Psoas muscle (tissue), 8 donors: ENCODE measurements at regions of chr9 and their contacts with region 1.

Region 1: GRCh38 chr9:111483862-111484571 is at the start of gene ECPAS:
- DNase-seq: peak; percentile 81 to 91
- ATAC-seq: peak; percentile 68 to 73 (median 72)
- H3K4me3 ChIP-seq: peak within 1 kb of the TSS; percentile 98
- H3K27ac ChIP-seq: peak within 1 kb of the TSS; percentile 100
- H3K4me1 ChIP-seq: peaks cover 25% of the 10 kb centered on the region
- H3K27me3 ChIP-seq: no peaks in the 10 kb centered on the region
- CTCF ChIP-seq: no peak
- total RNA-seq, gene ECPAS: 273 to 456 (median 349) TPM

Region 2: GRCh38 chr9:111449705-111450104 is 34.3 kb before region 1 on chr9:
- intact Hi-C with region 1: loop called (anchors 5 kb)
- DNase-seq: no peak
- ATAC-seq: peak; percentile 39 to 66 (median 62)
- H3K4me3 ChIP-seq: peak overlapping the region; percentile 2
- H3K27ac ChIP-seq: peak overlapping the region; percentile 70
- H3K4me1 ChIP-seq: peaks cover 50% of the 10 kb centered on the region
- H3K27me3 ChIP-seq: no peaks in the 10 kb centered on the region
- CTCF ChIP-seq: no peak

Region 3: DNA sequence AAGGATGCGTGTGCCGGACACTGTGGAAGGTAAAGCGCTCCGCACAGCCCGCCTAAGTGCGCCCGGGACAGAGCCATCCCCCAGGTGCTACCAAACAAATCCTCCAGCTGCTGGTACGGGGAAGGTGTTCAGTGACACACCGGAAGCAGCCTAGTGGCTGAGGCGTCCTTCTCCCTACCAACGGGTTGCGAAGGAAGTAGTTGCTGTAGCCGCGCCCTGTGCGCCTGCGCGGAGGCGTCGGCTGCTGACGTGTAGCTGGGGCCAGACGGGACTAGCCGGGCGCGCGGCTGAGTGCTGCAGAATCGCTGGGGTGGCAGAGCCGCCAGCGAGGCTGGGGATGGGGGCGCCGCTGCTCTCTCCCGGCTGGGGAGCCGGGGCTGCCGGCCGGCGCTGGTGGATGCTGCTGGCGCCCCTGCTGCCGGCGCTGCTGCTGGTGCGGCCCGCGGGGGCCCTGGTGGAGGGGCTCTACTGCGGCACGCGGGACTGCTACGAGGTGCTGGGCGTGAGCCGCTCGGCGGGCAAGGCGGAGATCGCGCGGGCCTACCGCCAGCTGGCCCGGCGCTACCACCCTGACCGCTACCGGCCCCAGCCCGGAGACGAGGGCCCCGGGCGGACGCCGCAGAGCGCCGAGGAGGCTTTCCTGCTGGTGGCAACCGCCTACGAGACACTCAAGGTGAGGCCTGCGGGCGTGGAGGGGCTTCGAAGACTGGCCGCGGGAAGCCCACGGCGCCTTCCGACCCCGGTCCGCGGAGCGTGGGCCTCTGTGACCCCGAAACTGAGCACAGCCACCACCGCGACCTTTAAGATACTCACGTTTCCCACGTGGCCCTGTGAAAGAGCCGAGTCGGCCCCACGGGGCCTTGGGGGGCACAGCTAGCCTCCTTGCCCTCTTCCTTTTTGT is 147.3 kb after region 1 on chr9 and contains the start of gene DNAJC25:
- intact Hi-C with region 1: loop called in 1 of 2 experiments (anchors 5 kb)
- DNase-seq: peak; percentile 96 to 98
- ATAC-seq: peak; percentile 99 to 100 (median 100)
- H3K4me3 ChIP-seq: peak within 1 kb of the TSS; percentile 82
- H3K27ac ChIP-seq: peak within 1 kb of the TSS; percentile 89
- H3K4me1 ChIP-seq: peaks cover 21% of the 10 kb centered on the region
- H3K27me3 ChIP-seq: no peaks in the 10 kb centered on the region
- CTCF ChIP-seq: no peak
- total RNA-seq, gene DNAJC25: 1.9 to 5.6 (median 4.5) TPM